CD14-positive monocyte (primary cell): ENCODE measurements at regions of chr5 and their contacts with region 1.

Region 1: GRCh38 chr5:132437604-132438266 is 52.8 kb downstream of the IRF1 start:
- DNase-seq: peak in 2 of 3 donors; percentile 83 to 93
- H3K4me3 ChIP-seq: peak overlapping the region; percentile 1 to 54 (median 15)
- H3K4me3 Mint-ChIP-seq: peak overlapping the region in 1 of 2 donors; percentile 47
- H3K27ac ChIP-seq: peak overlapping the region; percentile 76 to 94
- H3K27ac Mint-ChIP-seq: peak overlapping the region; percentile 89 to 97 (median 96)
- H3K4me1 ChIP-seq: peaks cover 68 to 82% of the 10 kb centered on the region in 2 donors
- H3K4me1 Mint-ChIP-seq: peaks cover 82% of the 10 kb centered on the region
- H3K27me3 ChIP-seq: no peaks in the 10 kb centered on the region
- H3K27me3 Mint-ChIP-seq: no peaks in the 10 kb centered on the region
- CTCF ChIP-seq: no peak

Region 2: DNA sequence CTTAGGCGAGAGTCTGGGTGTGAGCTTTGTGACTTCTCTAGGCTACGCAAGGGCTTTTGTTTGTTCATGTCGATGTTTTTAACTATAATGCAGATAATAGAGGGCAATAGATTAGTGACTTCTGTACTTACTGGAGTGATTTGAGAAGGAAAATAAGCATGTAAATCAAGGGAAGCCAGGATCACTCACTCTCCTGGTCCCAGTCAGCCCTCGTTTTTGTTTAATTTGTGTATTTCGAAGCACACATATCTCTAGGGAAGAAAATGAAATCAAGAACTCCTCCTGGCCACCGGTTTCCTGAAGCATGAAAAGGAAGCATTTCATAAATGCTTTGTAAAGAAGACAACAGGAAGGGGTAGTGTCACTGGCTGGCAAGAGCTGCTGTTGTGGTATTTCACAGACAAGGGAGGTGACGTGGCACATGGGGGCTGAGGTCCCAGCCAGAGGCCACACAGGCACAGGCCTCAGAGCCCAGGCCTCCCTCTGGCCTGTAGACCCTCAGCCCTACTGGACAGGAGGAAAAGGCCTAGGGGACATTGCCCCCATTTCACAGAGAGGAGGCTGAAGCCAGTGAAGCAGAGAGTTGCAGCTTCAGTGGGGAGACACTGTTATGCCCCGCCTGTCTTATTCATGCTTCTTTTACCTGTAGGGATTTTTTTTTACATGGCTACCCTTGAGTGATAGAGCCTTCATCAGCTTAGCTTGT is 18.7 kb after region 1 on chr5:
- intact Hi-C with region 1: loop called in 1 of 2 experiments (anchors 2 kb)
- DNase-seq: peak; percentile 86 to 95 (median 91)
- H3K4me3 ChIP-seq: peak overlapping the region; percentile 1 to 55 (median 16)
- H3K4me3 Mint-ChIP-seq: peak overlapping the region; percentile 62 to 74
- H3K27ac ChIP-seq: peak overlapping the region; percentile 99
- H3K27ac Mint-ChIP-seq: peak overlapping the region; percentile 99 to 100 (median 100)
- H3K4me1 ChIP-seq: peaks cover 88 to 93% of the 10 kb centered on the region in 2 donors
- H3K4me1 Mint-ChIP-seq: peaks cover 93% of the 10 kb centered on the region
- H3K27me3 ChIP-seq: no peaks in the 10 kb centered on the region
- H3K27me3 Mint-ChIP-seq: peaks cover 0 to 10% (median 0%) of the 10 kb centered on the region in 3 donors
- CTCF ChIP-seq: no peak